Activated T-helper 2 cell treated with anti-CD3 and anti-CD28 coated beads, Interferon-gamma antibody, Interleukin-2, Interleukin-4, amounts not matched to agents 10 μg/mL and 5 μg/mL and 100 μg/mL, durations not matched to agents 14 hours and 24 hours and 36 hours (primary cell): ENCODE measurements at regions of chr17 and their contacts with region 1.

Region 1: DNA sequence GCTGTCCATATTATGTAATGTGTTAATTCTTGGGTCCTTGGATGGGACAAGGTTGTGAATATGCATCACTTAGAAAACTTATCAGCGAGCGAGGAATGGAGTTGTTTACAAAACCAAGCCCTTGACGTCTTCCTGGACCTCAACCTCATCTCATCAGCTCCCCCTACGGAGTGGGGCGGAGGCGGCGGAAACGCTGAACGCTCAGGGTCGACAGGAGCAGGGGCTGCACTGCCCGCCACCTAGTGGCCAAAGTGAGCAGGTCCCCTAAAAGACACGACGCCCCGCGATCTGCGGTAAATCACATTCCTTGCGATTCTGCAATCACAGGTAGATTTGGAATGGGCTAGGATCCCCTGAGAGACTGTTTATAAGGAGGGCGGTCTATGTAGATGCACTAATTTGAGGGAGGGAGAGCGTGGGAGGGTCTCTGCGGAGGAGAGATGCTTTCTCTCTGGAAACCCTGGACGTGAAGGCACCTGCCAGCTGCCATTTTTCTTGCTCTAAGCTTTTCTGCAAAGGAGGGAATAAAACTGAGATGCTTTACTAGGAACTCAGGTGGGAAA is 5.4 kb upstream of the ICAM2 start:
- DNase-seq: peak; percentile 88
- H3K4me3 Mint-ChIP-seq: peak overlapping the region; percentile 74
- H3K27ac Mint-ChIP-seq: peak overlapping the region; percentile 93
- H3K4me1 Mint-ChIP-seq: peaks cover 63% of the 10 kb centered on the region
- H3K27me3 Mint-ChIP-seq: no peaks in the 10 kb centered on the region

Region 2: GRCh38 chr17:63919311-63919723 is 106.5 kb before region 1 on chr17:
- intact Hi-C with region 1: loop called (anchors 1 kb)
- DNase-seq: peak; percentile 64
- H3K4me3 Mint-ChIP-seq: no peak overlapping the region
- H3K27ac Mint-ChIP-seq: no peak overlapping the region
- H3K4me1 Mint-ChIP-seq: peaks cover 8% of the 10 kb centered on the region
- H3K27me3 Mint-ChIP-seq: peaks cover 8% of the 10 kb centered on the region

Region 3: DNA sequence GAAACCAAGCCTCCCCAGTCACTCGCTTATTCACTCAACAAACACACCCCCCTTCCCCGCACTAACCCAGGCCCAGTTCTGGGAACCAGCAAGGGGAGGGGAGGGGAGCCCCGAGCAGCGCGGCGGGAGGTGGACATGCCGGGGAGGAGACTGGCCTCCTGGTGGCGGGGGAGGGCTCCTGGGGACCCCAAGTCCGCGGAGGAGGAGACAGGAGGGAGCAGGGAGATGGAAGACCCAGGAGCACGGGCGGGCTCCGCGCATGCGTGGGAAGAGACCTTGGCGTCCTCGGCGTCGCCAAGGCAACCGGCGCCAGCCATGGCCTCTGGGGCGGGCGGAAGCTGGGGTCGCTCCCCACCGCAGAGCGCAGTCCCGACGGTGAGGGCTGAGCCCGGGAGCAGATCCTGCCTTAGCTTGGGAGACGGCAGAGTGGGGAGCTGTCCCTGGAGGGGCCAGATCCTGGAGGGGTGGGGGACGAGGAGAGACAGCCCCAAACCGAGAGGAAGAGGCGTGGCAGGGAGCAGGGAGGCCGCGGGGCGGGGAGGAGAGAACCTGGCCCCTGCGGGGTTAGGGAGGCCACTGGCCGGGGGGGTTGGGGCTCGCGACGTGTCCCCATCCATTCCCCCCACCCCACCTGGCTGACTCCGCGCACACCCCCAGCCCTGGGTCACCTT is 27.6 kb before region 1 on chr17 and contains the start of gene PRR29:
- intact Hi-C with region 1: loop called (anchors 5 kb)
- DNase-seq: peak; percentile 68
- H3K4me3 Mint-ChIP-seq: peak within 1 kb of the TSS; percentile 85
- H3K27ac Mint-ChIP-seq: no peak within 1 kb of the TSS
- H3K4me1 Mint-ChIP-seq: peaks cover 27% of the 10 kb centered on the region
- H3K27me3 Mint-ChIP-seq: peaks cover 23% of the 10 kb centered on the region
- total RNA-seq, gene PRR29: 0.14 and 0.18 TPM in 2 replicates

Region 4: GRCh38 chr17:64063766-64064224 is 38.0 kb after region 1 on chr17:
- intact Hi-C with region 1: loop called (anchors 2 kb)
- DNase-seq: no peak
- H3K4me3 Mint-ChIP-seq: no peak overlapping the region
- H3K27ac Mint-ChIP-seq: peak overlapping the region; percentile 30
- H3K4me1 Mint-ChIP-seq: peaks cover 80% of the 10 kb centered on the region
- H3K27me3 Mint-ChIP-seq: no peaks in the 10 kb centered on the region

Region 5: GRCh38 chr17:64091116-64091515 is 65.3 kb after region 1 on chr17:
- intact Hi-C with region 1: loop called (anchors 2 kb)
- DNase-seq: no peak
- H3K4me3 Mint-ChIP-seq: peak overlapping the region; percentile 70
- H3K27ac Mint-ChIP-seq: peak overlapping the region; percentile 96
- H3K4me1 Mint-ChIP-seq: peaks cover 74% of the 10 kb centered on the region
- H3K27me3 Mint-ChIP-seq: no peaks in the 10 kb centered on the region

Region 6: GRCh38 chr17:64262417-64263260 is 236.8 kb after region 1 on chr17 and contains the start of gene TEX2:
- intact Hi-C with region 1: loop called (anchors 10 kb)
- DNase-seq: peak; percentile 60
- H3K4me3 Mint-ChIP-seq: peak within 1 kb of the TSS; percentile 90
- H3K27ac Mint-ChIP-seq: peak within 1 kb of the TSS; percentile 85
- H3K4me1 Mint-ChIP-seq: peaks cover 28% of the 10 kb centered on the region
- H3K27me3 Mint-ChIP-seq: peaks cover 4% of the 10 kb centered on the region
- total RNA-seq, gene TEX2: 20.7 and 22.0 TPM in 2 replicates

Region 7: DNA sequence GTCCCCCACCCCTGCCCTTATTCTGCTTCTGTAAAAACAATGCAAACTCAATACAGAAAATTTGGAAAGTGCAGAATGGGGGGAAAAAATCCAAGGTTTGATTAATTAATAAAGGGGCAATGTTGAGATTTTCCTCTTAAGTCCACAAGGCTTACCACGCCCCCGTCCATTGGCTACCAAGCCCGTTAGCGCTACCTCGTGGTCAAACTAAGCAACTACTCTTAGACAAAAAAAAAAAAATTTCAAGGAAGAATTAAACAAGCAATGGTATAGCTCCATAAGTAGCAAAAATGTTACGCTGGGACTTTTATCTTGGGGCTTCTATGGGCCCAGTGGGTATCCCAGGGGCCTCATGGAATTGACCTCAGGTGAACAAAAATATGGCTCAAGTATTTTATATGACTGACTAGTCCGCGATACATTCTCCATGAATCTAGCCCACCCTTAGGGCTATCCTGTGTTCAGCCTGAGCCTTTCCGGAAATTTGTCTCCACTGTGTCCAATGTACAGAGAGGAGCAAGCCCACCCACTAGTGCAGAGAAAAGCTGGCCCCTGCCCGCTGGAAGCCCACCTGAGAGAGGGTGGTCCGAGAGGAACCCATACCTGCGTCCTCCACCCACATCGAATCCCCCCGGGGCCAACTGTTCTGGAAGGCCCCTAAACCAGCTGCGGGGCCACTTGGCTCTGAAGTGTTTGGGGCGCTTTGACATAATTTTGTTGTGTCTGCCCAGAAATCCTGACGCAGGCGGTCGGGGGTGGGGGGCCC is 256.3 kb after region 1 on chr17:
- intact Hi-C with region 1: loop called (anchors 5 kb)
- DNase-seq: peak; percentile 30
- H3K4me3 Mint-ChIP-seq: no peak overlapping the region
- H3K27ac Mint-ChIP-seq: no peak overlapping the region
- H3K4me1 Mint-ChIP-seq: peaks cover 4% of the 10 kb centered on the region
- H3K27me3 Mint-ChIP-seq: no peaks in the 10 kb centered on the region